A673 (cell line): ENCODE measurements at regions of chr2 and their contacts with region 1.

Region 1: GRCh38 chr2:199739413-199740110 is 111.4 kb downstream of the FTCDNL1 start:
- DNase-seq: peak; percentile 88
- H3K4me3 ChIP-seq: no peak overlapping the region
- H3K27ac ChIP-seq: peak overlapping the region; percentile 69
- H3K4me1 ChIP-seq: peaks cover 30% of the 10 kb centered on the region
- H3K27me3 ChIP-seq: no peaks in the 10 kb centered on the region
- CTCF ChIP-seq: peak; percentile 93

Region 2: DNA sequence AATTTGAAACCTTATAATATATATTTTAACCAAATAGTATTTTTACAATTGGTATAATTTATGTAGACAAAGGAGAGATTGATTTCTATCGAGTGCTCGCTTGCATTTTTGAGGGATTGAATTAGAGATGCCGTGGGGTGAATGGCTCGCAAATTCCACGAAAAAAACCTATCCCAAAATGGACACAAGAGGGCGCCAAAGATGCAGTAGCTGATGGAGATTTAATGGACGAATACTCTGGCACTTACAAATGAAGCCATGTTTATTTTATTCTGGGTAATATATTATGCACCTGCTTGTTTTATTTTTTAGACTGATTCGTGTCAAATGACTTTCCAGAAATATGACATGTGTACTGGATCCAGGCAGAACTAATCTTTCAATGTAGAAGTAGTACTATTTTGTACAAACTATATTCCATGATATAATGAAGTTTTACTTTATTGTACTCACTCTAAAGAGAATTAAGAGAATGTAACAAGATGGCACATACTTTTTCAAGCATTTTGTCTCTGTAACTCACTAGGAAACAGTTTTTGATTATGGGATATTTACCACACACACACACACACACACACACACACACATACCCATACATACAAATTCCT is 1429.8 kb before region 1 on chr2:
- CTCF ChIA-PET with region 1: interaction called, 5 read pairs
- POLR2A ChIA-PET with region 1: no interaction called
- intact Hi-C with region 1: loop called (anchors 1 kb)
- DNase-seq: peak; percentile 72
- H3K4me3 ChIP-seq: no peak overlapping the region
- H3K27ac ChIP-seq: no peak overlapping the region
- H3K4me1 ChIP-seq: peaks cover 4% of the 10 kb centered on the region
- H3K27me3 ChIP-seq: peaks cover 5% of the 10 kb centered on the region
- CTCF ChIP-seq: peak; percentile 88

Region 3: DNA sequence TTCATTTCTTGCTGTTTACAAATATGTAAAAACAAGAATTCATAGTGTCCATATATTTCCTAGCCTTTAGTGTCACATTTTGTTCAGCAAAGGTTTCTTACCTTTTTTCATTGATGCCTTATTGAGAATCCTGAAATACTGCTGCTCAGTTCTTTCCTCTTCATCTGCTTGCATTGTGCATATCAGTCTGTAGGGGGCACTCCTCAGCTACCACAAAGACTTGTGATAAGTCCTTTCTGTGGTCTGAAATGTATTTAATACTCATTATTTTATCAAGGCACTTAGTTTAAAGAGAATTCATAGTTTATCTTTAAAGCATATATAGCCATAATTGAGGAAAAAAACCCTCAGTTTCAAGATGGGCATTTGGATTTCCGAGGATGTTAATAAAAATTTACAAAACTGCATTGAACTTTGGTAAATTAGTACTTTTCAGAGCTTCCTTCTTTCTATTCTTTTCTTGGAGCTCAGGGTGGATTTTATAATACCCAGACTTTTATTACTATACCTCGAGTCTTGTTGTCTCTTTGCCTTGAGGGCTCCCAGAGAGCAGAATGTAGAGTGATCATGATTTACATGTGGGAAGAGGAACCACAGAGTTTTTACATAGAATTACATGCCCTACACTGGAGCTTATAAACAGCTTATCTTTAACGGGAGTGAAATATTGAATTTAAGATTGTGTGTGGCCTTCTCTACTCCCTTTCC is 1365.0 kb before region 1 on chr2:
- CTCF ChIA-PET with region 1: no interaction called
- POLR2A ChIA-PET with region 1: no interaction called
- intact Hi-C with region 1: loop called (anchors 10 kb)
- DNase-seq: peak; percentile 67
- H3K4me3 ChIP-seq: no peak overlapping the region
- H3K27ac ChIP-seq: no peak overlapping the region
- H3K4me1 ChIP-seq: no peaks in the 10 kb centered on the region
- H3K27me3 ChIP-seq: no peaks in the 10 kb centered on the region
- CTCF ChIP-seq: peak; percentile 87

Region 4: DNA sequence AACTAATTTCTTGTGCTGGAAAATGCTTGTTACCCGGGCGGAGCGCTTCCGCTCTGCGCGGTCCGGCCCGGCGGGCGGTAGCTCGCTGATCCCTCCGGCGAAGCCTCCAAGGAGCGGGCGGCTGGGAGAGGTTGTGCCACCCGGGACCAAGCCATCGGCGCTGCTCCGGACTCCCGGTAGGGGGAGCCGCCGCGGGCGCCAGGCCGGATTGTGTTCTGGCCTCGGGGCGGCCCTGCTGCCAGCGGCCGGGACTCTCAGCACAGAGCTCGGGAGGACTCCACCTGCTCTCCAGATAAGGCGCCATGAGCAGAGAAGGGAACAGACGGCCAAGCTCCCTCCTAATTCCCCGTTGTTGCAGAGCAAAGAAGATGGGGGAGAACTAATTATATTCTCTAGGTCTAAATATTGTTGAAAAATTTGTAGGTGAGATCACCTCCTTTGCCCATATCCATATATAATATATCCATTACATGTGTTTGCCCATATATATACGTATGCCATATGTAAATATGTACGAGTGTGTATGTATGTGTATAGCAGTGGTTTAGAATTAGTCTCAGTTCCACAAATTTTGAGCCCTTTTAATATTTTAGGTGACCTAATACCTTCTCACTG is 268.0 kb before region 1 on chr2:
- CTCF ChIA-PET with region 1: no interaction called
- POLR2A ChIA-PET with region 1: no interaction called
- intact Hi-C with region 1: loop called (anchors 5 kb)
- DNase-seq: peak; percentile 73
- H3K4me3 ChIP-seq: peak overlapping the region; percentile 42
- H3K27ac ChIP-seq: no peak overlapping the region
- H3K4me1 ChIP-seq: peaks cover 3% of the 10 kb centered on the region
- H3K27me3 ChIP-seq: peaks cover 21% of the 10 kb centered on the region
- CTCF ChIP-seq: peak; percentile 87

Region 5: GRCh38 chr2:199602271-199602895 is 137.2 kb before region 1 on chr2:
- CTCF ChIA-PET with region 1: interaction called, 4 read pairs
- POLR2A ChIA-PET with region 1: no interaction called
- intact Hi-C with region 1: loop called (anchors 2 kb)
- DNase-seq: peak; percentile 86
- H3K4me3 ChIP-seq: no peak overlapping the region
- H3K27ac ChIP-seq: peak overlapping the region; percentile 76
- H3K4me1 ChIP-seq: peaks cover 33% of the 10 kb centered on the region
- H3K27me3 ChIP-seq: no peaks in the 10 kb centered on the region
- CTCF ChIP-seq: peak; percentile 54

Region 6: DNA sequence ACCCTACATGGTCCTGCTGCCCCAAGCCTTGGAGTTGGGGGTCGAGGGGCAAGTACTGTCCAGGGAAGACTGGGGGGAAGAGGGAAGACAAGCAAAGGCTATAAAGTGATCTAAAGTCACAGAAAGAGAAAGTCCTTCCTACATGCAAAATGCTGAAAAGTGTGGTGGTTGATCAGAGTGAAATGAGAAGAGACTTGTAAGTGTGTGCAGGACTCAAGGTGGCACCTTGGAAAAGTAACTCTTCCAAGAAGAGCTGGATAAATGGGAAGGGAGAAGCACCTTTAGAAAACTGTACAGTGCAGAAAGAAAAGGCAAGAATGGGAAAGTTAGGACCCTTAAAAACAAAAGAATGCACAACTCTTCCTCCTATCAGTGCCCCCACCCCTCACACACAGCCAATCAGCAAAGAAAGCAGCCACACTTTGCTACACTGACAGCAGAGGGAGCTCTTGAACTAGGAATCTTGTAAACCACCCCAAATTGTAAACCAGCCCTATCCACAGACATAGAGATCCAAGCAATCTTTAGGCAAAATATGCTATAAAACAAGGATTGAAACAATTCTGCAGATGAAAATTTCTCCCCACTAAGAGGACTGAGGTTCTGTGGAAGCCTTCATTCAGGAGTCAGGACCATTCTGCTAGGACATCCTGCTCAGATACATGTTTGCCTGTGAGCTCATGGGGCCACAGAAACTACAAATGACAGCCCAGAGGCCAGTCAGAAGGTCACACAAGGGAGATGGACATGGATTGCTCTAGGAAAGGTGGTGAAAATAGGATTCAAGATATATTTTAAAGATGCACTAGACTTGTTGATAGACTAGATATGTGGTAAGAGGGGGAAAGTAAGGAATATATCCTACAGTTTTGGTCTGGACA is 35.0 kb before region 1 on chr2:
- CTCF ChIA-PET with region 1: interaction called, 13 read pairs
- POLR2A ChIA-PET with region 1: no interaction called
- intact Hi-C with region 1: loop called (anchors 1 kb)
- DNase-seq: peak; percentile 54
- H3K4me3 ChIP-seq: no peak overlapping the region
- H3K27ac ChIP-seq: no peak overlapping the region
- H3K4me1 ChIP-seq: no peaks in the 10 kb centered on the region
- H3K27me3 ChIP-seq: no peaks in the 10 kb centered on the region
- CTCF ChIP-seq: peak; percentile 76

Region 7: GRCh38 chr2:199784512-199784911 is 45.0 kb after region 1 on chr2:
- CTCF ChIA-PET with region 1: no interaction called
- POLR2A ChIA-PET with region 1: no interaction called
- intact Hi-C with region 1: no loop called
- DNase-seq: no peak
- H3K4me3 ChIP-seq: no peak overlapping the region
- H3K27ac ChIP-seq: no peak overlapping the region
- H3K4me1 ChIP-seq: no peaks in the 10 kb centered on the region
- H3K27me3 ChIP-seq: no peaks in the 10 kb centered on the region
- CTCF ChIP-seq: no peak